Posterior cingulate gyrus (tissue), 11 donors: ENCODE measurements at regions of chr20 and their contacts with region 1.

Region 1: GRCh38 chr20:63344616-63345327 is 16.4 kb downstream of the CHRNA4 start:
- DNase-seq: peak in 2 of 10 donors; percentile 76 to 77

Region 2: GRCh38 chr20:63191400-63191799 is 153.4 kb before region 1 on chr20:
- intact Hi-C with region 1: no loop called
- DNase-seq: peak in 2 of 10 donors; percentile 76 to 88

Region 3: GRCh38 chr20:63265891-63266515 is 78.8 kb before region 1 on chr20:
- intact Hi-C with region 1: no loop called
- DNase-seq: no peak

Region 4: DNA sequence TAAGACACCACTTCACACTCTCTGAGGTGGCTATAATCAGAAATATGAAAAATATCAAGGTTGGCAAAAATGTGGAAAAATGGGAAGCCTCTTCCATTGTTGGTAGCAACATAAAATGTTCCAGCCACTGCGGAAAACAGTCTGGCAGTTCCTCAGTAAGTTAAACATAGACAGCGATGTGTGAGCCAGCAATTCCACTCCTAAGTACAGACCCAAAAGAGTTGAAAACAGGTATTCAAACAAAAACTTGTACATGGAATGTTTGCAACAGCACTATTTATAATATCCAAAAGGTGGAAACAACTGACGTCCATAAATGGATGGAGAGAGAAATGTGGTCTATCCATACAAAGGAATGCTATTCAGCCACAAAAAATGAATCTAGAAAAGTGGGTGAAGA is 168.4 kb after region 1 on chr20:
- intact Hi-C with region 1: loop called (anchors 5 kb)
- DNase-seq: no peak